RWPE1 (cell line): ENCODE measurements at regions of chr17 and their contacts with region 1.

Region 1: DNA sequence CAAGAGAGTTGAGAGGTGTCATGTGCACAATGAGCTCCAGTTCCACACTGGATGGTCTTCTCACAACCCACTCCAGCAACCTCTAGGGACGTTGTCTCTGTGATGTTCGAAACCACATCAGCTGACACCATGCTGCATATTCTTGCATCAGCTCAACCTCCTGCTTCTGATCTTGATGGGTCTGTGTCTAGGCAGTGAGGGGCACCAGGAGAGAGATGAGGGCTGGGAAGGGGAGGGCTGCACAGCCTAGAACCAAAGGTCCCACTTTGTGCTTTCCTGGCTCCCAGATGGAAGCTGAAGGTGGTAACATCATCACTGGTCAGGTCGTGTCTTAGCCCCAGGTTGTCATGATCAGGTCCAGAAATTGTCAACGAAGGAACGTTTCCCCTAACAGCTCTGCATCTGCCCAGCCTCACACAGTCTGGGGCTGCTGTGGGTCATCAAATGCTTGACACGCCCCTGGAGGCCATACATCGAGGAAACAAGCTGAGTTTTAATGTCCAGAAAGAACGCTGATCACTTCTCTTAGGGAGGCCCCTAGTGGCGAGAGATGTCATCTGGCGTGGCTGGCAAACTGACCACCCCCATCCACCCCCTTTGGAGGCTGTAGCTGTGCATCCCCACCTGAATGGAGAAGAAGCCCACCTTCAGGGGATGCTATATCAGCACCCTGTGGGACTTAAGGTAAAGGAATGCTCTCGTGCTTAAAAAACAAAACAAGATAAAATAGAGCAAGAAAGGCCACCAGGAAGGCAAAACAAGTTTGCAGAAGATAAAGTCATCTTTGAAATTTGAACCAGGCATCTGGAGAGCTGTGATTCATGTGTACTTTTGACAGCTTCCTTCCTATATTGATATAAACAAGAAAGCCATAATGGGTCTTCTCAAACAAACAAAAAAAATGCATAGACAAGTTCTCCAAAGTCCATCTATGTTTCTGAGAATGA is 58.3 kb downstream of the WIPI1 start:
- DNase-seq: peak; percentile 77
- H3K27ac ChIP-seq: no peak overlapping the region
- CTCF ChIP-seq: peak; percentile 74

Region 2: GRCh38 chr17:68260051-68260762 is 138.8 kb before region 1 on chr17:
- CTCF ChIA-PET with region 1: interaction called, 18 read pairs
- POLR2A ChIA-PET with region 1: no interaction called
- DNase-seq: no peak
- H3K27ac ChIP-seq: no peak overlapping the region
- CTCF ChIP-seq: no peak

Region 3: GRCh38 chr17:68386240-68387087 is 12.5 kb before region 1 on chr17:
- CTCF ChIA-PET with region 1: interaction called, 11 read pairs
- POLR2A ChIA-PET with region 1: no interaction called
- DNase-seq: no peak
- H3K27ac ChIP-seq: no peak overlapping the region
- CTCF ChIP-seq: no peak